Activated naive CD4-positive, alpha-beta T cell treated with anti-CD3 and anti-CD28 coated beads, Interleukin-2, amount 10 ng/mL, durations not matched to agents 7 days and 5 days (primary cell): ENCODE measurements at regions of chr6 and their contacts with region 1.

Region 1: DNA sequence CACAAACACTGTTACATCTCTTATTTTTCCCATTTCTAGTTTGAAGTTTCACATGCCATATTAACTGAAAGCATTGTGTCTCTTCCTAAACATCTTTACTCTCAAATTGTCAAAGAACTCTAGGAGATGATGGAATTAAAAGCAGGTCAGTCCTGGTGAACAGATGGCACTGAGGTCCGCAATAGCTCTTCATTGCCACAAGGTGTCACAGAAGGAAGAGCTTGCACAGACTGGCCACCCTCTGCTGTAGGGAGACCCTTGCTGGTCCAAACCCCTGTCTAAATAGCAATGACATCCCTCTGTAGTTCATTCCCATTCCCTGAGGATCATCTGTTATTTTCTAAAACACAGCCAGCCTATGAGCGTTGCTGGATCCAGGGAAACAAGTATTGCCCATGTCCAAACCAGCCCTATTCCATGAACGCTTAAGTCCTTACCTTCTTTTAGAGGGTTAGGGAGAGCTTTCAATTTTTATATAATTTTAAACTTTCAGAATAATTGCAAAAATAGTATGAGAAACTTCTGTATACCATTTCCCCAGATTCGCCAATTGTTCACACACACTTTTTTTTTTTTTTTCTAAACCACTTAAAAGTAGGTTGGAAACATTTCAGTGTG is 10.1 kb upstream of the HDAC2 start:
- DNase-seq: peak; percentile 30
- H3K4me3 Mint-ChIP-seq: no peak overlapping the region
- H3K27ac Mint-ChIP-seq: no peak overlapping the region
- H3K4me1 Mint-ChIP-seq: no peaks in the 10 kb centered on the region
- H3K27me3 Mint-ChIP-seq: peaks cover 4% of the 10 kb centered on the region

Region 2: DNA sequence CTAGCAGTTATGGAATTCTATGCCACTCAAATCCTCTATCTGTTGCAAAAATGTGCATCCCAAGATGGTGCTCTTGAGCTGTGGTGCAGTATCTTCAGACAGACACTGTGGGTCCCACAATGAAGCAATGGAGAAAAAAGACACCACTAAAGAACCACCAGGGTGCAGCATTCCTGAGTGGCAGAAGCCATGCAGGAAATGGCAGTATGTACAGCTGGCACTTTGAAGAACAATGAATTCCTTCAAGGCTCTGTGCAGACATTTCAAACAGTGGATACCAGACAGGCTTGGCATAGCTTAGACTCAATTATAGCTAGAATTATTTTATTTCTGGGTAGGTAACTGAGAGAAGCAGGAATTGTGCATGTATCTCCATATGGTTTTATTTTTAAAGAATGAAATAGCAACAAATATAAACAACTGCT is 13.9 kb after region 1 on chr6:
- CTCF ChIA-PET with region 1: interaction called, 11 read pairs
- DNase-seq: peak; percentile 67
- H3K4me3 Mint-ChIP-seq: no peak overlapping the region
- H3K27ac Mint-ChIP-seq: no peak overlapping the region
- H3K4me1 Mint-ChIP-seq: peaks cover 9% of the 10 kb centered on the region
- H3K27me3 Mint-ChIP-seq: peaks cover 44% of the 10 kb centered on the region